ENCODE measurements at regions of chr18 and their contacts with region 1.

Region 1: GRCh38 chr18:33231474-33232317 is 208.8 kb downstream of the CCDC178 start:
- DNase-seq: peak; percentile 67
- H3K4me3 ChIP-seq: no peak overlapping the region
- H3K27ac ChIP-seq: no peak overlapping the region
- H3K4me1 ChIP-seq: no peaks in the 10 kb centered on the region
- H3K27me3 ChIP-seq: no peaks in the 10 kb centered on the region
- CTCF ChIP-seq: peak; percentile 45 to 86 (median 64)
- EP300 ChIP-seq: no peak
- POLR2A ChIP-seq: no peak

Region 2: GRCh38 chr18:33269223-33269622 is 37.5 kb after region 1 on chr18:
- intact Hi-C with region 1: no loop called
- DNase-seq: no peak
- H3K4me3 ChIP-seq: no peak overlapping the region
- H3K27ac ChIP-seq: no peak overlapping the region
- H3K4me1 ChIP-seq: no peaks in the 10 kb centered on the region
- H3K27me3 ChIP-seq: no peaks in the 10 kb centered on the region
- CTCF ChIP-seq: no peak
- EP300 ChIP-seq: no peak
- POLR2A ChIP-seq: no peak

Region 3: DNA sequence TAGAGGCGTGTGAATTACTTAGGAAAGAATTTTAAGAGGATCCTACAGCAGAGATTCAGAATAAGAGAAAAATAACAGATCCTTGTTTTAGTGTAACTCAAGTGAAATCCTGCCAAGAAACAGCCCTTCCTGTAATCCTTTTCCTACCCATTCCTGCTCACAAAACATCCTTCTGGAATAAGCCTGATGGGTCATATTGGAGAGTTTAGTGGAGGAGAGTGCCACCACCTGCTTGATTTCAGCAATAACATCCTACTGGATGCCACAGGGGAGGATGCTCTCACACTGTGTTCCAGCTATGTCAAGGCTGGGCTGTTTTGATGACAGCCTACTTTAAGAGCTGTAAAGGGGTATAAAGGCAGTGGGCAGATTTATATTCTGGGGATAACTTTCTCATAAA is 263.6 kb after region 1 on chr18:
- intact Hi-C with region 1: loop called (anchors 10 kb)
- DNase-seq: no peak
- H3K4me3 ChIP-seq: no peak overlapping the region
- H3K27ac ChIP-seq: no peak overlapping the region
- H3K4me1 ChIP-seq: no peaks in the 10 kb centered on the region
- H3K27me3 ChIP-seq: no peaks in the 10 kb centered on the region
- CTCF ChIP-seq: peak in 1 of 4 experiments; percentile 17
- EP300 ChIP-seq: no peak
- POLR2A ChIP-seq: no peak

Region 4: DNA sequence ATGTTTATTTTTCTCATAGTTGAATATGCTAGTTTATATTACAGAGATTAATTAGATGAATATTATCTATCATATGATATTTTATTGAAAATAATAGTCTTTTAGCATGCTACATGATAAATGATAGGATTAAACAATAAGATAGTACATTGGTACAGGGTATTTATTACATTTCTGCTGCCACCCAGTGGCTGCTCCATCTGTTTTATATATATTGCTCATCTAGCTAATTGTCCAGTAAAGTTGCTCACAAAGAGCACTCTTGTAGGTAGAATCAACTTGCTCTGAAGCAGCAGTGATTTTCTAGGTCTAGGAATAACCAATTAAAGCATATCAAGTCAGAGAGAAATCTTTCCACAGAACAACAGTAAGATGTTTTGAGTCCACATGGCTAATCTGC is 529.7 kb after region 1 on chr18:
- intact Hi-C with region 1: loop called (anchors 5 kb)
- DNase-seq: no peak
- H3K4me3 ChIP-seq: no peak overlapping the region
- H3K27ac ChIP-seq: no peak overlapping the region
- H3K4me1 ChIP-seq: peaks cover 0 to 8% (median 7%) of the 10 kb centered on the region in 4 donors
- H3K27me3 ChIP-seq: no peaks in the 10 kb centered on the region
- CTCF ChIP-seq: no peak
- EP300 ChIP-seq: no peak
- POLR2A ChIP-seq: no peak

Measured in sigmoid colon (tissue), 7 donors.